ENCODE measurements at regions of chr1 and their contacts with region 1.

Region 1: GRCh38 chr1:26889551-26890466 is at the start of gene GPN2:
- DNase-seq: peak; percentile 89
- ATAC-seq: peak; percentile 96
- H3K4me3 ChIP-seq: peak within 1 kb of the TSS; percentile 99
- H3K27ac ChIP-seq: peak within 1 kb of the TSS; percentile 96
- H3K4me1 ChIP-seq: peaks cover 11% of the 10 kb centered on the region
- H3K27me3 ChIP-seq: no peaks in the 10 kb centered on the region
- CTCF ChIP-seq: no peak
- total RNA-seq, gene GPN2: 24.6 TPM

Region 2: GRCh38 chr1:26799479-26800142 is 90.2 kb before region 1 on chr1:
- intact Hi-C with region 1: loop called (anchors 10 kb)
- DNase-seq: no peak
- ATAC-seq: peak; percentile 68
- H3K4me3 ChIP-seq: no peak overlapping the region
- H3K27ac ChIP-seq: peak overlapping the region; percentile 68
- H3K4me1 ChIP-seq: peaks cover 26% of the 10 kb centered on the region
- H3K27me3 ChIP-seq: no peaks in the 10 kb centered on the region
- CTCF ChIP-seq: no peak